ENCODE measurements at regions of chr16 and their contacts with region 1.

Region 1: DNA sequence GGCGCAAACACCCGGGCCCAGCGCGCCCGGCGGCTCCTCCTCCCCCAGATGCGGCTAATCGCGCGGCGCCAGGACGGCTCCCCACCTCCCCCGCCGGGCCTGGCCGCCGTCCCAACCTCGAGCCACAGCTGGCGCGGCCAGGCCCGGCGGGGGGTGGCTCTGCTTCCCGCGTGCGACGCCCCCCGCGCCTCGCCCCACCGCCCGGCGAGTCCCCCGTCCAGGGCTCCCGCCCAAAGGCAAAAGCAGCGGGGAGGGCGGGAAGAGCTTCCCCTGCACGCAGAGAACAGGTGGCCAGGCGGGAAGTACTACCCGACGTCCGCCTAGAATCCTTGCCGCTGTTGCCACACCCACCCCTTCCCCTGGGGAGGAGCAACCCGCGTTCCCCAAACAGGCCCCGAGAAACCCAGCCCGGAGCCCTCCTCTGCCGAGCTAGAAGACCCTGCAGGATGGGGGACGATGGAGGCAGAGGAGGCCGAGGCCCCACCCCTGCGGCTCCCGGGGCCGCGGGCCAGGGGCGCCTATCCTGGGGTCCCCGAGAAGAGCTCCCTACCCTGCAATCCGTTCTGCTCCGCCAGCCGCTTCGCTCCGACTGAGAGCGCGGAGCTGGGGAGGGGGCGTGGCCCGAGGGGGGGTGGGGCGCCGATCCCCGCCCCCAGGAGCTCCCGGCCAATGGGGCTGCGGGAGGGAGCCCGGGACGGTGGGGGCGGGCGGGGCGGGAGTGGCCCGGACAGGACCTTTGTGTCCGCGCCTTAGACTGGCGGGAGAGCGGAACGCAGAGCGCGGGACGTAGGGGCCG is at the start of gene CARHSP1:
- DNase-seq: peak; percentile 89
- H3K4me3 Mint-ChIP-seq: peak within 1 kb of the TSS; percentile 97
- H3K27ac Mint-ChIP-seq: peak within 1 kb of the TSS; percentile 95
- H3K4me1 Mint-ChIP-seq: peaks cover 59% of the 10 kb centered on the region
- H3K27me3 Mint-ChIP-seq: no peaks in the 10 kb centered on the region
- total RNA-seq, gene CARHSP1: 168 to 179 TPM

Region 2: GRCh38 chr16:8674413-8675022 is 194.1 kb before region 1 on chr16 and contains the start of gene ABAT:
- CTCF ChIA-PET with region 1: interaction called, 3 read pairs
- POLR2A ChIA-PET with region 1: interaction called, 12 read pairs
- DNase-seq: peak; percentile 93
- H3K4me3 Mint-ChIP-seq: peak within 1 kb of the TSS; percentile 76
- H3K27ac Mint-ChIP-seq: peak within 1 kb of the TSS; percentile 26
- H3K4me1 Mint-ChIP-seq: peaks cover 20% of the 10 kb centered on the region
- H3K27me3 Mint-ChIP-seq: no peaks in the 10 kb centered on the region
- total RNA-seq, gene ABAT: 5.5 to 5.9 TPM

Region 3: DNA sequence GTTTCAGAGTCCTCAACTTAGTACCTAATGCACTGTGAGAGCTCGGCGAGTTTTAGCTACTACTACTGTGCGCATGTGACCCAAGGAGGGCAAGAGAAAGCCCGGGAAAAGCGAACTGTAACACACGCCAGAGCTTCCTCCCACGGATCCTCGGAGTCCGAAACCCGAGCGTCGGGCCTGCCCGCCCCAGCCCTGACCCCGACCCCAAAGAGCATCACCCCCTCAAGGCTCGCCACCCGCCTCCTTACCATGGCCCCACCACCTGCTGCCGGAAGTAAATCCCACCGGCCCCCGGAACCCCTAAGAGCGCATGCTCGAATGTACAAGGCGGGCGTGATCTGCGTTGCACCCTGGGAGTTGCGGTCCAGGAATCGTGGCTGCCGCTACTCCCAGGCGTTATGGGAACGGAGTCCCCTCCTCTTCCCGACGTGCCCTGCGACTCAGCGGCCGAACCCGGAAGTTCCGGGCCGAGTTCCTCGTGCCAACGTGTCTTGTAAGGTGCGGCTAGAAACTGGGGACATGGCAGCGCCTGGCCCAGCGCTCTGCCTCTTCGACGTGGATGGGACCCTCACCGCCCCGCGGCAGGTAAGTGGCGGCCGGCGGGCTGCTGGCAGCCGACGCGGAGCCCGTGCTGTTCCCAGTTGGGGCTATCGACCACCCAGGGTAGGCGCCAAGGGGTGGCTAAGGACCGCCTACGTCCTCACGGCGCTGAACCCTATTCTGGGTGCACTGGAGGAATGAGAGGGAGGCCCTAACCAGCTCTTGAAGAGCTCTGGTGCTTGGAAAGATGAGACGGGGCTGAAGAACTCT is 71.0 kb before region 1 on chr16 and contains the starts of genes PMM2 and TMEM186:
- CTCF ChIA-PET with region 1: interaction called, 5 read pairs
- POLR2A ChIA-PET with region 1: interaction called, 67 read pairs
- DNase-seq: peak; percentile 97
- H3K4me3 Mint-ChIP-seq: peak within 1 kb of the TSS; percentile 93
- H3K27ac Mint-ChIP-seq: peak within 1 kb of the TSS; percentile 71
- H3K4me1 Mint-ChIP-seq: peaks cover 38% of the 10 kb centered on the region
- H3K27me3 Mint-ChIP-seq: no peaks in the 10 kb centered on the region
- total RNA-seq, gene PMM2: 41.7 to 41.8 TPM
- total RNA-seq, gene TMEM186: 12.2 to 12.6 TPM

Region 4: DNA sequence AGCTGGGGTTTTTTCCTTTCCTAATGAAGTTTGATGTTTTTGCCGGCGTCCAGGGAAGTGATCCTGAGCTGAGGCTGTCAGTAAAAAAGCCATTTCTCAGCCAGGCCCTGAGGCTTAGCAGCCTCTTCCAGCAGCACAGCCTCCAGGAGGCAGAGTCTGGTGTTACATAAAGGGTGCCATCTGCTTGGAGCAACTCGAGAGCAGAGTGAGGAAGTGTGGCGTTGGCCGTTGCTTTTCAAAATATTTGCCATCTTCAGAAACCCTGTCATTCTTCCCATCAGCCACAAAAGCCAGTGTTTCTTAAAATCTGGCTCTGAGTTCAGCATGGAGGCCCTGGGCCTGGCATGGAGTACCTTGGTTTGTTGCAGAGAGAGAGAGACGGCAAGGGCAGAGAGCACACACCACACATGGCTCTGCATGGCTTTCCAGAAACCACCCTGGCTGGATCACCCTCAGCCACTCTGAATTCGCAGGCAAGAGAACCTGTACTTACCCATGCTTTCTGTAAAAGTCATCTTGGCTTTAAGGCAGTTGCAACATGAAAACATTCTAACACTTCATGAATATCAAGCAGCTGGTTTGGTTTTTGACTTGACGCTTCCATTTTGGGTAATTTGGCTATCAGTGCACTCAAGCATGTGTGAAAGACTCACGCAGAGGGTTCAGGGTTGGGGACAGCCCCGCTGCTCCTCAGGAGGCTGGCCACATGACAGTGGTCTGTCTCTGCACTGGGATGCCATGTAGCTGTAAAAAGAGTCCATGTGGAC is 49.9 kb before region 1 on chr16:
- CTCF ChIA-PET with region 1: interaction called, 7 read pairs
- POLR2A ChIA-PET with region 1: interaction called, 37 read pairs
- DNase-seq: no peak
- H3K4me3 Mint-ChIP-seq: no peak overlapping the region
- H3K27ac Mint-ChIP-seq: peak overlapping the region; percentile 17
- H3K4me1 Mint-ChIP-seq: peaks cover 40% of the 10 kb centered on the region
- H3K27me3 Mint-ChIP-seq: no peaks in the 10 kb centered on the region

Region 5: DNA sequence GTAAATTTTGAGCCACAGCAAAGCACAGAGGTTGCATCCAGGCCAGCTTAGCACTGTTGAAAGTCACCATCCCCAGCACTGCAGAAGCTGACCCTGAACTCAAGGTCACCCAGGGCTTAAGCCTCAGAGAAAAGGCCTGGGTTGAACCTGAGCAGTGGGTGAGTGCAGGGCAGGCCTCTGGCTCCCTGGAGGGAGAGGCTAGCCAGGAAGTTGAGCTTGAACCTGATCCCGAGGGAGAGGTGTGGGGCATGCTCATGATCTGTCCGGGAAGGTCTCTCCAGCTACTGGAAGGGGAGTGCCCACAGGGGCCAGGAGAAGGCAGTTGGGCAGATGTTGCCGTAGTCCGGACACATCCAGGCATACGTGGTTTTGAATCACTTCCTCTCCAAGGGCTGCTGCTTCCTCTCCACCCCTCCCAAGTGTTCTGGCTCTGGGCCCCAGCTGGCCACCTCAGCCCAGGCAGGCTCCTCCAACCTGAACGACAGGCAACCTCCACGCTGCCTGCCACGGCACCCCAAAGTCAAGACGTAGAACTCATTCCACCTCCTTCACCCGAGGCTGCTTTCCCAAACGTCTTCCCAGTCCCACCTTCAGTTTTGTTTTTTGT is 18.2 kb before region 1 on chr16:
- CTCF ChIA-PET with region 1: interaction called, 3 read pairs
- POLR2A ChIA-PET with region 1: interaction called, 84 read pairs
- DNase-seq: peak; percentile 39
- H3K4me3 Mint-ChIP-seq: no peak overlapping the region
- H3K27ac Mint-ChIP-seq: peak overlapping the region; percentile 83
- H3K4me1 Mint-ChIP-seq: peaks cover 52% of the 10 kb centered on the region
- H3K27me3 Mint-ChIP-seq: no peaks in the 10 kb centered on the region

Region 6: GRCh38 chr16:8892101-8892575 is 23.5 kb after region 1 on chr16:
- CTCF ChIA-PET with region 1: interaction called, 3 read pairs
- POLR2A ChIA-PET with region 1: interaction called, 13 read pairs
- DNase-seq: no peak
- H3K4me3 Mint-ChIP-seq: peak overlapping the region; percentile 24
- H3K27ac Mint-ChIP-seq: peak overlapping the region; percentile 88
- H3K4me1 Mint-ChIP-seq: peaks cover 30% of the 10 kb centered on the region
- H3K27me3 Mint-ChIP-seq: no peaks in the 10 kb centered on the region

Region 7: DNA sequence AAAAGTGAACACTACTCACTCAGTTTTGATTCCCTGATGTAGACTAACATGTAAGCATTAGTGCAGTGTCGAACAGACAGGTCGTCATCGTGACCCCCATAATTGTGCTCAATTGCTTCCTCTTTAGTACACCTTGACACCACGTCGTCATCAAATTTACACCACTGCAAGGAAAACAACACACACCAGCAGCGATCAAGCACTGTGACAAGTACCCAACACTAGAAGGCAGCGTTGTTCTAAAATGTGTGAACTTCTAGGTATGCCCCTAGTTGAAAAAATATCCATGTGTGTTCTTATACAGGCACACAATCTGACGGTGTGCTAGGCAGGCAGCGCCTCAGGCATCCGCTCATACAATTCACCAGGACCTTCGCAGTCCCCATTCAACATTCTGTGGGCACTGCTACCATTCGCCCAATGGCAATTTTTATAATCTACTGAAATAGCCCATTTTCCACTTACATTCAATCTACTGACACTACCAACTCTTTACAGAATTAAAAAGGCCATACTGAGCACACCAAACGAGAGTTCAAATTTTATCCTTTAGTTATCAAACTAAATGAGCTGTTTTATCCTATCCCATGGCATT is 36.7 kb after region 1 on chr16:
- CTCF ChIA-PET with region 1: no interaction called
- POLR2A ChIA-PET with region 1: no interaction called
- DNase-seq: no peak
- H3K4me3 Mint-ChIP-seq: no peak overlapping the region
- H3K27ac Mint-ChIP-seq: no peak overlapping the region
- H3K4me1 Mint-ChIP-seq: peaks cover 25% of the 10 kb centered on the region
- H3K27me3 Mint-ChIP-seq: no peaks in the 10 kb centered on the region

Region 8: DNA sequence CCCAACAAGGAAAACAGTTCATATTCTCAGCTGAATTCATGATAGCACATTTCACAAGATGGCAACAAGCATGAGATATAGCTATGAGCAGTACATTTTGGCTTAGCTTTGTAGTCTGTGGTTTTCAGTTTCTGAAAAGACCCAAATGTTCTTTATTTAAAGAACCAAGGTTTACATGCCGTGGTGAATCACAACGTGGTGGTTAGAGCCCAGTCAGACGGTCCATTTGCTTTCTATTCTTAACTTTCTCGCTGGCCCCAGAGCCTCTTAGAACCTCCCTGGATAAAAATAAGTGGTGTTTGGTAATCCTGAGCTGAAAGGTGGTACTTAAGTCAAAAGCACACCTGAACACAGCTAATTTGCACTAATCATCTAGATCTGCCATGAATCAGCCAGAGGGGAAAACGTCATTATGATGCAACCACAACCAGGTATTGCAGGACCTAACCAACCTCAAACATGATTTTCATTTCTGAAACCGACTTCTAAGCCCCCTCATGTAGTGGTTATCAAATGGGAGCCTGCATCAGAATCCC is 204.3 kb after region 1 on chr16:
- CTCF ChIA-PET with region 1: no interaction called
- POLR2A ChIA-PET with region 1: interaction called, 14 read pairs
- DNase-seq: peak; percentile 28
- H3K4me3 Mint-ChIP-seq: peak overlapping the region; percentile 15
- H3K27ac Mint-ChIP-seq: peak overlapping the region; percentile 91
- H3K4me1 Mint-ChIP-seq: peaks cover 44% of the 10 kb centered on the region
- H3K27me3 Mint-ChIP-seq: no peaks in the 10 kb centered on the region

Measured in activated CD4-positive, alpha-beta memory T cell treated with anti-CD3 and anti-CD28 coated beads, Interleukin-2, amount 10 ng/mL, durations not matched to agents 7 days and 5 days (primary cell).